Activated CD4-positive, alpha-beta memory T cell treated with anti-CD3 and anti-CD28 coated beads, Interleukin-2, amount 10 ng/mL, durations not matched to agents 7 days and 5 days (primary cell): ENCODE measurements at regions of chr4 and their contacts with region 1.

Region 1: GRCh38 chr4:163544407-163545038 is 50.0 kb downstream of the TMA16 start:
- DNase-seq: peak; percentile 62
- H3K4me3 Mint-ChIP-seq: no peak overlapping the region
- H3K27ac Mint-ChIP-seq: no peak overlapping the region
- H3K4me1 Mint-ChIP-seq: no peaks in the 10 kb centered on the region
- H3K27me3 Mint-ChIP-seq: no peaks in the 10 kb centered on the region

Region 2: GRCh38 chr4:163107754-163108153 is 436.8 kb before region 1 on chr4:
- CTCF ChIA-PET with region 1: interaction called, 14 read pairs
- POLR2A ChIA-PET with region 1: no interaction called
- DNase-seq: no peak
- H3K4me3 Mint-ChIP-seq: no peak overlapping the region
- H3K27ac Mint-ChIP-seq: no peak overlapping the region
- H3K4me1 Mint-ChIP-seq: peaks cover 16% of the 10 kb centered on the region
- H3K27me3 Mint-ChIP-seq: no peaks in the 10 kb centered on the region

Region 3: DNA sequence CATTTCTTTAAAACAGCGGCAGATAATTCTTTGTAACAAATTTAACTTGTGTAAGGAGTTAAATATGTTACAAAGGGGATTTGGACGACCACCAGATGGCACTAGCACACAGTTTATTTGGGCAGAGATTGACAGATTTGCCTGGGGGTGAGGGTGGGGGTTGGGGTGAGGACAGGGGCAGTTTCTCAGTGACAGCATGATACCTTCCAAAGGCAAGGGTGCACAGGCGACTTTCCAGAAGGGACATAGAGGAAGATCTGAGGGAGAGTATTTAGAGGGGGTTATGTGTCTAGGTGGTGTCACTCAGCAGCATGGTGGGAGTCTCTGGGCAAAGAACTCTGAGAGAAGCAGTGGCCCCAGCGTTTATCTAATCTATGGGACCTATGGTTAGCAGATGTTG is 59.6 kb before region 1 on chr4:
- CTCF ChIA-PET with region 1: interaction called, 22 read pairs
- POLR2A ChIA-PET with region 1: no interaction called
- DNase-seq: peak; percentile 62
- H3K4me3 Mint-ChIP-seq: no peak overlapping the region
- H3K27ac Mint-ChIP-seq: no peak overlapping the region
- H3K4me1 Mint-ChIP-seq: peaks cover 3% of the 10 kb centered on the region
- H3K27me3 Mint-ChIP-seq: peaks cover 17% of the 10 kb centered on the region

Region 4: DNA sequence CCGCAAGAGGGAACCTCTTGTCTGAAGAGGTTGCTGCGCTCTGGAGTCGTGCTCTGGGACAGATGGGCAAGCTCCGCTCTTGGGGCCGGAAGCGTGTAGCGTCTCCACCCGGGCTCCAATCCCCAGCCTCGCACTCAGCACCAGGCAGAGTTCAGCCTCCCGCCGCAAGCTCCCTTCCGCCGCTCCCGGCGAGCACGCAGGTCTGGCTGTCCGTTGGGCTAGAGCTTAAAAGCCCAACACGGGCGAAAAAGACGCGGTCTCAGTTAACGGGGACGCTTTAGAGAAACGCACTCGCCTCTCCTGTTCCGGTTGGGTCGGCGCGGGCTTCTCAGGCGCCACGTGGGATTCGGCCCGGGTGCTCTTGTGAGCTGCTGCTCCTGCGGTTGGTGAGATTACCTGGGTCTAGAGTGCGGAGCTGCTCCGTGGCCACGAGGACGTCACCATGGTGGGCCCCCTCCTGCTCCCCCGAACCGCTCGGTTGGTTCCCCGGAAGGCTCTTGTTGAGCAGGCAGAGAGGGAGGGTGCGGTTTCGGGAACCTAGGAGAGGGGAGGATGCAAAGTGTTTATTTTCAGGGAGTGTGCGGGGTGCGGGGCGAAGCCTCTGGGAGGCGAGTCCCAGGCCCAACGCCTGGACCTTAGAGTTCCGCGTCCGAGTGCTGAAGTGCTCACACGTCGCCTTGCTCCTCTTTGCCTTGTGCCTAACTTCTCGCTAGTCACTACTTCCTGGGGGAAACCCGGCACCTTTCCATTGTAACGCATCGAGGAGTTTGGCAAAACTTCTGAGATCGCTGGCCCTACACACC is 50.0 kb before region 1 on chr4 and contains the start of gene TMA16:
- CTCF ChIA-PET with region 1: interaction called, 47 read pairs
- POLR2A ChIA-PET with region 1: interaction called, 32 read pairs
- DNase-seq: peak; percentile 89
- H3K4me3 Mint-ChIP-seq: peak within 1 kb of the TSS; percentile 89
- H3K27ac Mint-ChIP-seq: peak within 1 kb of the TSS; percentile 94
- H3K4me1 Mint-ChIP-seq: peaks cover 37% of the 10 kb centered on the region
- H3K27me3 Mint-ChIP-seq: peaks cover 6% of the 10 kb centered on the region
- total RNA-seq, gene TMA16: 27.9 to 30.3 TPM

Region 5: DNA sequence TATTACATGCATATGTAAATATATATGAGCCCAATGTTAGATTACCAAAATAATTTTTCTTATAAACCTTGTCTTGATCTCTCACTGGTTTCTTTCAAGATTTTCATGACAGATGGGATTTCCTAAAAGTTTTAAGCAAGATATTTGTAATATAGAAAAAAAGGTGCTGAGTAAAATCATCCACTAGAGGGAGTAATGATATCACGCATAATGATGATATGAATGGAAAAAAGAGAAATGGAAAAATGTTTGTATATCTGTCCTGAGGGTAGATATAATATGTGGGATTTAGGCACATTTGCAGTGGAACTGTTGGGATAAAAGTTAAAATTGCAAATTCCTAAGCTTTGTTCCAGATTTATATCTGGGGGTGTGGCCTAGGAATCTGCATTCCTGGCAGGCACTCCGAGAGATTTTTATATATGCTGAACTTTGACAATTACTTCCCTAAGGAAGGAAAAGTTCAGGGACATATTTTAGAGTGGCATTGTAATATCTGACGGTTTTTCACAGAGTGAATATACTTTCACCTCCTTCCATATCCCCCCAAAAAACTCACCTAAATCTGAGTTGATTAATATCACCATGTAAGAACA is 10.4 kb after region 1 on chr4:
- CTCF ChIA-PET with region 1: interaction called, 36 read pairs
- POLR2A ChIA-PET with region 1: no interaction called
- DNase-seq: no peak
- H3K4me3 Mint-ChIP-seq: no peak overlapping the region
- H3K27ac Mint-ChIP-seq: no peak overlapping the region
- H3K4me1 Mint-ChIP-seq: peaks cover 26% of the 10 kb centered on the region
- H3K27me3 Mint-ChIP-seq: peaks cover 1% of the 10 kb centered on the region

Region 6: DNA sequence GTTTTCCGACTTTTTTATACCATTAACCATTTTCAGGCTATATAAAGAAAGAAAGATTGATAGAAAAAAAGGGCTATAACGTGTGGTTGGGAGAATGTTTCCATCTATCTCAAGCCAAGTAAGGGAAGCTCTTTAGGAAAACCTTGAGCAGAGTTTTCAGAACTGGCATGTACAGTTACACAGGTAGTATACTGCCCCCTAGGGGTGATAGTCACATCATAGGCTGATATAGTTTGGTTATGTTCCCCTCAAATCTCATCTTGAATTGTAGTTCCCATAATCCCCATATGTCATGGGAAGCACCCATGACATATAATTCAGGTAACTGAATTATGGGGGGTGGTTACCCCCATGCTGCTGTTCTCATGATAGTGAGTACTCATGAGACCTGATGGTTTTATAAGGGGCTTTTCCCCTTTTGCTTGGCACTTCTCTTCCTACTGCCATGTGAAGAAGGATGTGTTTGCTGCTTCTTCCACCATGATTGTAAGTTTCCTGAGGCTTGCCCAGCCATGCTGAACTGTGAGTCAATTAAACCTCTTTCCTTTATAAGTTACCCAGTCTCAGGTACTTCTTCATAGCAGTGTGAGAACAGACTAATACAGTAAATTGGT is 136.8 kb after region 1 on chr4:
- CTCF ChIA-PET with region 1: interaction called, 122 read pairs
- POLR2A ChIA-PET with region 1: no interaction called
- DNase-seq: no peak
- H3K4me3 Mint-ChIP-seq: no peak overlapping the region
- H3K27ac Mint-ChIP-seq: no peak overlapping the region
- H3K4me1 Mint-ChIP-seq: no peaks in the 10 kb centered on the region
- H3K27me3 Mint-ChIP-seq: no peaks in the 10 kb centered on the region

Region 7: GRCh38 chr4:163707873-163708272 is 163.3 kb after region 1 on chr4:
- CTCF ChIA-PET with region 1: no interaction called
- POLR2A ChIA-PET with region 1: no interaction called
- DNase-seq: no peak
- H3K4me3 Mint-ChIP-seq: no peak overlapping the region
- H3K27ac Mint-ChIP-seq: no peak overlapping the region
- H3K4me1 Mint-ChIP-seq: no peaks in the 10 kb centered on the region
- H3K27me3 Mint-ChIP-seq: no peaks in the 10 kb centered on the region

Region 8: GRCh38 chr4:163755013-163755412 is 210.5 kb after region 1 on chr4:
- CTCF ChIA-PET with region 1: interaction called, 17 read pairs
- POLR2A ChIA-PET with region 1: no interaction called
- DNase-seq: no peak
- H3K4me3 Mint-ChIP-seq: no peak overlapping the region
- H3K27ac Mint-ChIP-seq: no peak overlapping the region
- H3K4me1 Mint-ChIP-seq: no peaks in the 10 kb centered on the region
- H3K27me3 Mint-ChIP-seq: no peaks in the 10 kb centered on the region